ENCODE measurements at regions of chr11 and their contacts with region 1.

Region 1: GRCh38 chr11:32026766-32027165 is 64.1 kb upstream of the RCN1 start:
- DNase-seq: no peak
- H3K4me3 ChIP-seq: no peak overlapping the region
- H3K27ac ChIP-seq: no peak overlapping the region
- H3K4me1 ChIP-seq: no peaks in the 10 kb centered on the region
- H3K27me3 ChIP-seq: peaks cover 0 to 7% of the 10 kb centered on the region in 2 donors
- CTCF ChIP-seq: no peak
- POLR2A ChIP-seq: no peak

Region 2: GRCh38 chr11:31953803-31954327 is 72.9 kb before region 1 on chr11:
- intact Hi-C with region 1: loop called (anchors 2 kb)
- DNase-seq: no peak
- H3K4me3 ChIP-seq: no peak overlapping the region
- H3K27ac ChIP-seq: no peak overlapping the region
- H3K4me1 ChIP-seq: no peaks in the 10 kb centered on the region
- H3K27me3 ChIP-seq: no peaks in the 10 kb centered on the region
- CTCF ChIP-seq: no peak
- POLR2A ChIP-seq: no peak

Measured in breast epithelium (tissue), 4 donors.